Head of caudate nucleus (tissue), 42 donors: ENCODE measurements at regions of chr20 and their contacts with region 1.

Region 1: DNA sequence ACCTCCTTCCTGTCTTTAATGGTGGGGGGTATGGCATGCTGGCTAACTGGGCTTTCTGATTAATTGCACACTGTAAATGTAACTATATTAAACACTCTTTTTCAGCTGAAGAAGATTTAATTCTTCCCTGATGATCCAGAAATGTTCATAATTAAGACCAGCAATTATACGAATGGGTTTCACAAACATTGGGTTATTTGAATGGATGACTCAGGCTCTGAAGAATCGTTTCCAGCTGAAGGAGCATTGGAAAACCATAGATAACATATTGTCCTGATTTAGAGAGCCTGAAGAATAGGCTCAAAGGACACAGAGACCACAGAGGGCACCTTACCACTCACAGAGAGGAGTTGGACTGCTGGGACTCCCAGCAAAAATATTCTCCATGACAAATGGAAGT is 130.7 kb upstream of the SSTR4 start:
- DNase-seq: no peak

Region 2: GRCh38 chr20:23235173-23236027 is 331.0 kb after region 1 on chr20:
- intact Hi-C with region 1: loop called (anchors 5 kb)
- DNase-seq: peak in 32 of 42 donors; percentile 19 to 76 (median 50)